CD8-positive, alpha-beta T cell (primary cell): ENCODE measurements at regions of chr19 and their contacts with region 1.

Region 1: GRCh38 chr19:45643024-45643926 is 4.1 kb upstream of the EML2 start:
- DNase-seq: peak; percentile 80 to 95 (median 88)
- ATAC-seq: peak; percentile 32
- H3K4me3 ChIP-seq: peak overlapping the region in 1 of 2 experiments; percentile 53
- H3K4me3 Mint-ChIP-seq: peak overlapping the region; percentile 53
- H3K27ac ChIP-seq: peak overlapping the region in 1 of 2 experiments; percentile 93
- H3K27ac Mint-ChIP-seq: peak overlapping the region; percentile 75
- H3K4me1 ChIP-seq: peaks cover 46% of the 10 kb centered on the region
- H3K4me1 Mint-ChIP-seq: peaks cover 43% of the 10 kb centered on the region
- H3K27me3 ChIP-seq: no peaks in the 10 kb centered on the region
- H3K27me3 Mint-ChIP-seq: peaks cover 3% of the 10 kb centered on the region
- CTCF ChIP-seq: peak; percentile 96

Region 2: GRCh38 chr19:45439569-45440254 is 203.6 kb before region 1 on chr19:
- CTCF ChIA-PET with region 1: interaction called, 17 read pairs
- POLR2A ChIA-PET with region 1: interaction called, 3 read pairs
- intact Hi-C with region 1: loop called (anchors 1 to 5 kb)
- DNase-seq: peak; percentile 76 to 94 (median 86)
- ATAC-seq: peak; percentile 70
- H3K4me3 ChIP-seq: peak overlapping the region; percentile 23 to 71
- H3K4me3 Mint-ChIP-seq: peak overlapping the region; percentile 74
- H3K27ac ChIP-seq: peak overlapping the region; percentile 65 to 81
- H3K27ac Mint-ChIP-seq: no peak overlapping the region
- H3K4me1 ChIP-seq: peaks cover 37% of the 10 kb centered on the region
- H3K4me1 Mint-ChIP-seq: peaks cover 30% of the 10 kb centered on the region
- H3K27me3 ChIP-seq: no peaks in the 10 kb centered on the region
- H3K27me3 Mint-ChIP-seq: no peaks in the 10 kb centered on the region
- CTCF ChIP-seq: peak; percentile 100

Region 3: DNA sequence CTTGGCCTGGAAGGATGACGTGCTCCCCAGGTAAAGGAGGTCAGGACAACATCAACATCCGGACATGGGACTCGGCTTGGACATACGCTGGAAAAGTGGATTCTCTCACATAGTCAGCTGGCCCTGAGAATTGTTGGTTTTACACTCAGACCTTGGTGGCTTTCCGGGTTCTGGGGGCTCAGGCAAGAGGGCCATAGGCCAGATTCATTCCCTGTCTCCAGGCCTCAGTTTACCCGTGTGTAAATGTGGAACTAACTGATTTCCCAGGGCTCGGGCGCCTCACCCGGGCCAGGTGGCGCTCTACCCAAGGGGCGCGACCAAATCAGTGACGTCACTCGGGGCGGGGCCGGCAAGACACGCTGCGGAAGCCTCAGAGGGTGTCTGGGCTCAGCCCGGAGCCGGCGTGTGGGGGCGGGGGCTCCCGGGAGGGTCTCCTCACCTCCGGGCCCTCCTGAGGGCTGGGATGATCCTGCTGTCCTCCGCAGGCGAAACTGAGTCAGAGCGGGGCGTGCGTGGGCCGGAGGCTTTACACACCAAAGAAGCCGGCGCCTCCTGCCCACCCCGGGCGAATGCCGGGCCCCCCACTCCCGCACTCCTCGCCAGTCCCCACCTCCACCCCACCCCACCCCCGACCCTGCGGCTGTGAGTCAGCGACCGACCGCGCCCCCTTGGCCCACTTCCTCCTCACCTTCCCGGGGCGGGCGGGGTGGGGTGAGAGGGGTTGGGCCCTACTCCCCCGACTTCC is 136.9 kb before region 1 on chr19:
- CTCF ChIA-PET with region 1: interaction called, 11 read pairs
- POLR2A ChIA-PET with region 1: no interaction called
- intact Hi-C with region 1: loop called (anchors 1 kb)
- DNase-seq: peak; percentile 93 to 99 (median 97)
- ATAC-seq: peak; percentile 79
- H3K4me3 ChIP-seq: peak overlapping the region; percentile 74 to 90
- H3K4me3 Mint-ChIP-seq: peak overlapping the region; percentile 88
- H3K27ac ChIP-seq: peak overlapping the region; percentile 85 to 91
- H3K27ac Mint-ChIP-seq: peak overlapping the region; percentile 93
- H3K4me1 ChIP-seq: peaks cover 33% of the 10 kb centered on the region
- H3K4me1 Mint-ChIP-seq: peaks cover 39% of the 10 kb centered on the region
- H3K27me3 ChIP-seq: no peaks in the 10 kb centered on the region
- H3K27me3 Mint-ChIP-seq: no peaks in the 10 kb centered on the region
- CTCF ChIP-seq: peak; percentile 32

Region 4: GRCh38 chr19:45564131-45564780 is 79.0 kb before region 1 on chr19:
- CTCF ChIA-PET with region 1: no interaction called
- POLR2A ChIA-PET with region 1: no interaction called
- intact Hi-C with region 1: no loop called
- DNase-seq: peak in 1 of 9 experiments; percentile 37
- ATAC-seq: no peak
- H3K4me3 ChIP-seq: peak overlapping the region in 1 of 2 experiments; percentile 20
- H3K4me3 Mint-ChIP-seq: peak overlapping the region; percentile 37
- H3K27ac ChIP-seq: peak overlapping the region; percentile 24 to 61
- H3K27ac Mint-ChIP-seq: peak overlapping the region; percentile 85
- H3K4me1 ChIP-seq: peaks cover 46% of the 10 kb centered on the region
- H3K4me1 Mint-ChIP-seq: peaks cover 40% of the 10 kb centered on the region
- H3K27me3 ChIP-seq: no peaks in the 10 kb centered on the region
- H3K27me3 Mint-ChIP-seq: no peaks in the 10 kb centered on the region
- CTCF ChIP-seq: no peak

Region 5: GRCh38 chr19:45591004-45591637 is 52.2 kb before region 1 on chr19:
- CTCF ChIA-PET with region 1: interaction called, 17 read pairs
- POLR2A ChIA-PET with region 1: no interaction called
- intact Hi-C with region 1: no loop called
- DNase-seq: peak in 6 of 9 experiments; percentile 14 to 49 (median 34)
- ATAC-seq: peak; percentile 63
- H3K4me3 ChIP-seq: no peak overlapping the region
- H3K4me3 Mint-ChIP-seq: no peak overlapping the region
- H3K27ac ChIP-seq: no peak overlapping the region
- H3K27ac Mint-ChIP-seq: no peak overlapping the region
- H3K4me1 ChIP-seq: no peaks in the 10 kb centered on the region
- H3K4me1 Mint-ChIP-seq: no peaks in the 10 kb centered on the region
- H3K27me3 ChIP-seq: peaks cover 0 to 17% of the 10 kb centered on the region in 2 experiments
- H3K27me3 Mint-ChIP-seq: peaks cover 35% of the 10 kb centered on the region
- CTCF ChIP-seq: peak; percentile 31

Region 6: GRCh38 chr19:45632468-45633196 is 10.6 kb before region 1 on chr19:
- CTCF ChIA-PET with region 1: interaction called, 20 read pairs
- POLR2A ChIA-PET with region 1: no interaction called
- intact Hi-C with region 1: no loop called
- DNase-seq: peak in 4 of 9 experiments; percentile 24 to 54 (median 41)
- ATAC-seq: no peak
- H3K4me3 ChIP-seq: no peak overlapping the region
- H3K4me3 Mint-ChIP-seq: no peak overlapping the region
- H3K27ac ChIP-seq: no peak overlapping the region
- H3K27ac Mint-ChIP-seq: no peak overlapping the region
- H3K4me1 ChIP-seq: no peaks in the 10 kb centered on the region
- H3K4me1 Mint-ChIP-seq: peaks cover 2% of the 10 kb centered on the region
- H3K27me3 ChIP-seq: no peaks in the 10 kb centered on the region
- H3K27me3 Mint-ChIP-seq: no peaks in the 10 kb centered on the region
- CTCF ChIP-seq: no peak

Region 7: DNA sequence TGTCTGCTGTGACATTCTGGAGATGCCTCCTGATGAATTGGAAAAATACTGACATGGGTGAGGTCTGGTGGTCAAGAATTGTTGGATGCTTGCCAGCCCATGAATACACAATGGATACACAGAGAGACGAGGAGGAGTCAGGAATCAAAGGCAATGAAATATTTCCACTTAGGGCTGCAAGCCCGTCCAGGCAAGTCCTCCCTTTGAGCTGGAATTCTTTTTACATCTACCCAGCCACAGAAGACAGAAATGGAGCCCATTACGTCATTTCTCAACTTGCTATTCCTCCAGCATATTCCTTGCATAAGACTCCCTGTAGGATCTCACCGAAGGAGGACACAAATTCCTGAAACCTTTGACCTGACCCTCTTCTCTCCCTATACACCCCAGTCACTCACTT is 413.3 kb after region 1 on chr19:
- CTCF ChIA-PET with region 1: no interaction called
- POLR2A ChIA-PET with region 1: no interaction called
- intact Hi-C with region 1: no loop called
- DNase-seq: no peak
- ATAC-seq: no peak
- H3K4me3 ChIP-seq: no peak overlapping the region
- H3K4me3 Mint-ChIP-seq: no peak overlapping the region
- H3K27ac ChIP-seq: no peak overlapping the region
- H3K27ac Mint-ChIP-seq: no peak overlapping the region
- H3K4me1 ChIP-seq: no peaks in the 10 kb centered on the region
- H3K4me1 Mint-ChIP-seq: no peaks in the 10 kb centered on the region
- H3K27me3 ChIP-seq: no peaks in the 10 kb centered on the region
- H3K27me3 Mint-ChIP-seq: peaks cover 39% of the 10 kb centered on the region
- CTCF ChIP-seq: no peak